ENCODE measurements at regions of chr9 and their contacts with region 1.

Region 1: GRCh38 chr9:124551472-124552272 is 44.5 kb upstream of the NR5A1 start:
- DNase-seq: peak; percentile 77
- ATAC-seq: peak; percentile 98
- H3K4me3 Mint-ChIP-seq: no peak overlapping the region
- H3K27ac Mint-ChIP-seq: no peak overlapping the region
- H3K4me1 Mint-ChIP-seq: peaks cover 13% of the 10 kb centered on the region
- H3K27me3 Mint-ChIP-seq: no peaks in the 10 kb centered on the region
- CTCF ChIP-seq: peak; percentile 23; the same call in 1 of the 2 replicates

Region 2: GRCh38 chr9:124562328-124562727 is 10.7 kb after region 1 on chr9:
- CTCF ChIA-PET with region 1: interaction called, 16 read pairs
- POLR2A ChIA-PET with region 1: interaction called, 3 read pairs
- DNase-seq: no peak
- ATAC-seq: no peak
- H3K4me3 Mint-ChIP-seq: no peak overlapping the region
- H3K27ac Mint-ChIP-seq: no peak overlapping the region
- H3K4me1 Mint-ChIP-seq: peaks cover 29% of the 10 kb centered on the region
- H3K27me3 Mint-ChIP-seq: no peaks in the 10 kb centered on the region
- CTCF ChIP-seq: no peak

Region 3: GRCh38 chr9:124574534-124575341 is 23.1 kb after region 1 on chr9:
- CTCF ChIA-PET with region 1: interaction called, 11 read pairs
- POLR2A ChIA-PET with region 1: no interaction called
- DNase-seq: no peak
- ATAC-seq: no peak
- H3K4me3 Mint-ChIP-seq: no peak overlapping the region
- H3K27ac Mint-ChIP-seq: peak overlapping the region; percentile 48; the same call in 1 of the 2 replicates
- H3K4me1 Mint-ChIP-seq: peaks cover 54% of the 10 kb centered on the region
- H3K27me3 Mint-ChIP-seq: no peaks in the 10 kb centered on the region
- CTCF ChIP-seq: no peak

Region 4: GRCh38 chr9:124593651-124594058 is 42.0 kb after region 1 on chr9:
- CTCF ChIA-PET with region 1: interaction called, 18 read pairs
- POLR2A ChIA-PET with region 1: interaction called, 3 read pairs
- DNase-seq: peak; percentile 31
- ATAC-seq: peak; percentile 85
- H3K4me3 Mint-ChIP-seq: peak overlapping the region; percentile 60
- H3K27ac Mint-ChIP-seq: peak overlapping the region; percentile 95
- H3K4me1 Mint-ChIP-seq: peaks cover 81% of the 10 kb centered on the region
- H3K27me3 Mint-ChIP-seq: no peaks in the 10 kb centered on the region
- CTCF ChIP-seq: no peak

Region 5: GRCh38 chr9:124708633-124709291 is 157.1 kb after region 1 on chr9:
- CTCF ChIA-PET with region 1: interaction called, 31 read pairs
- POLR2A ChIA-PET with region 1: no interaction called
- DNase-seq: no peak
- ATAC-seq: no peak
- H3K4me3 Mint-ChIP-seq: no peak overlapping the region
- H3K27ac Mint-ChIP-seq: peak overlapping the region; percentile 91; the same call in 1 of the 2 replicates
- H3K4me1 Mint-ChIP-seq: peaks cover 50% of the 10 kb centered on the region
- H3K27me3 Mint-ChIP-seq: no peaks in the 10 kb centered on the region
- CTCF ChIP-seq: no peak

Region 6: GRCh38 chr9:124764774-124765438 is 213.2 kb after region 1 on chr9:
- CTCF ChIA-PET with region 1: interaction called, 10 read pairs
- POLR2A ChIA-PET with region 1: no interaction called
- DNase-seq: no peak
- ATAC-seq: 0 out of 2 replicates have a peak, but pooled peaks have one; percentile 12
- H3K4me3 Mint-ChIP-seq: peak overlapping the region; percentile 47
- H3K27ac Mint-ChIP-seq: 0 out of 2 replicates have a peak overlapping the region, but pooled peaks have one; percentile 46
- H3K4me1 Mint-ChIP-seq: peaks cover 93% of the 10 kb centered on the region
- H3K27me3 Mint-ChIP-seq: no peaks in the 10 kb centered on the region; the same call in none of the 2 replicates
- CTCF ChIP-seq: no peak